IMR-90 (cell line): ENCODE measurements at regions of chr2 and their contacts with region 1.

Region 1: DNA sequence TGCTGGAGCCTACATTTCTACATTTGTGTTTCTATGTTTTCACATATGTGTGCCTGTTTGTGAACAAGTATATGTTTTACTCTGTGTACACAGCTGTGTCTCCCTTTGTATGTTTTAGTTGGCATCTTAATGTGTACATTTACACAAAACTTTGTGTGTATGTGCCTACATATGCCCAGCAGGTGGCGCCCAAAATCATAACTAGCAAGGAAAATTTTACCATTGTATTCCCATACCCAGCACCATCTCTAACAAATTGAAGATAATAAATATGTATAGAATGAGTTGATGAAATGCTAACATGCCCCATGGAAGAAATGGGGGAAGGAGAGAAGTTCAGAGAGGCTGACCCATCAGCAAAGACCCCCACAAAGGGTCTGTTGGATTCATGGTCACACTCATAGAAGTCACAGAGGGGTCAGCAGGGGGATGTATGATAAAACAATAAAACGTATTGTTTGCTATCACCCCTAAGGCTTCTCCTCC is 48.1 kb downstream of the PKDCC start:
- DNase-seq: peak; percentile 83
- ATAC-seq: peak; percentile 65
- H3K4me3 ChIP-seq: no peak overlapping the region
- H3K27ac ChIP-seq: no peak overlapping the region
- H3K4me1 ChIP-seq: peaks cover 22% of the 10 kb centered on the region
- H3K27me3 ChIP-seq: no peaks in the 10 kb centered on the region
- CTCF ChIP-seq: peak; percentile 88
- POLR2A ChIP-seq: peak; percentile 27; the same call in 1 of the 2 replicates
- RAD21 ChIP-seq: peak; percentile 90

Region 2: DNA sequence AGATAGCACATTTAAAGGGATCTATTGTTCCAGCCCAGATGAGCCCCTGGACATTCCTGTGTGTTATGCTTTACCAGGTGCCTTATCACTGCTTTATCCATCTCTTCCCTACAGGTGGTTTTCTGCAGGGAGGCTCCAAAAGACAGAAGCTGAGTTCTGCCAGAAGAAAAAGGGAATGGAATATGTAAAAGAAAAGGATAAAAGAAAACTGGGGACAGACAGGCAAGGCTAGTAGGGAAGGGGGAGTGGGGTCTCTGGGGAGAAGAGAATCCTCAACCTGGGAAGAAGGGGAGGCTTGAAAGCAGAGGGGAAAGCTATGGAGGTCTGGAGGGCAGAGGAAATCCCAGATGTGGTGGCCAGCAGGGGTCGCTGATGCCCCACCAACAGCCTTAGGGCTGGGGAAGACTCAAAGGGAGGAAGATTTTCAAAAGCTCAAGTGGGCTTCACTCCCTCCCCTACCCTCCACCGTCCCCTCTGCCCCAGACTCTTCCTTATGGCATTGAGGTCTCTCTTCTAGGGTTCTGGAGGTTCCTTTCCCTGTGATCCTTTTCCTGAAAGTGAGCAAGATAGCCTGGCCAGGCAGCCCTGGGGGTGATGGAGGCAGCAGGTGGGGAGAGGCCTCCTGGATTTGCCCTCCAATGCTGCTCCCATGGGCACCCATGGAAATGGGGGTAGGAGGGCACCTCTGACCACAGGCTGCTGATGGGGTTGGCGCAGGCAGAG is 226.3 kb before region 1 on chr2:
- CTCF ChIA-PET with region 1: interaction called, 15 read pairs
- POLR2A ChIA-PET with region 1: no interaction called
- dilution Hi-C with region 1: no loop called
- in situ Hi-C with region 1: no loop called
- intact Hi-C with region 1: no loop called
- DNase-seq: peak; percentile 55
- ATAC-seq: peak; percentile 77
- H3K4me3 ChIP-seq: no peak overlapping the region
- H3K27ac ChIP-seq: no peak overlapping the region
- H3K4me1 ChIP-seq: peaks cover 22% of the 10 kb centered on the region
- H3K27me3 ChIP-seq: no peaks in the 10 kb centered on the region
- CTCF ChIP-seq: peak; percentile 94
- POLR2A ChIP-seq: 0 out of 2 replicates have a peak, but pooled peaks have one; percentile 28
- RAD21 ChIP-seq: peak; percentile 98

Region 3: DNA sequence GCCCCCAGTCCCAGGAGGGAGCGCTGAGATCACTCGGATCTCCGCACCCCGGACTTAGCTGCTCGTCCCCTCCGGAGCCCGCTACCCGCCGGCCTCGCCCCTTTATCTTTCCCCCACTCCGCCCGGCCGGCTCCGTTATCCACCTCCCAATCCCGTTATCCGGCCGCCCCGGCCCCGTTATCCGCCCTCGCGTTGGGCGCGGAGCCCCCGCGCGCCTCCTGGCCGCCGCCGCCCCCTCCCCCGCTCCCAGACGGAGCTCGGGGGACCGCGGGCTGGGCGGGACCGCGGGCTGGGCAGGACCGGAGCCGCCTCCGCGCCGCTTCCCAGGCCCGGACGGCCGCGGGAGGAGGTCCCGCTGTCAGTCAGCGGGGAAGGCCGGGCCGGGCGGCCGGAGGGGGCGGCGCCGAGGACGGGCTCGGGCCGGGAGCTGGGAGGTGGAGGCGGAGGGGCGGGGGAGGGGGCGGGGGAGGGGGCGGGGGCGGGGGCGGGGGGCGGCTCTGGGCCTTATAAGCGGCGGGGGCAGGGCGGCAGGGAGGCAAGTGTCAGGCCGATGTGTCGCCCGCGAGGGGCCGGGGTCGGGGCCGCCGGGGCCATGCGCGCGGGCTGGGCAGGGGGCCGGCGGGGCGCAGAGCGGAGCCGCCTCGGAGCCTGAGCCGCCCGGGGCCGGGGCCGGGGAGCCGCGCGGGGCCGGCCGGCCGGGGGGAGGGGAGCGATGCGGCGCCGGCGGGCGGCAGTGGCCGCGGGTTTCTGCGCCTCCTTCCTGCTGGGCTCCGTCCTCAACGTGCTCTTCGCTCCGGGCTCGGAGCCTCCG is 48.3 kb before region 1 on chr2 and contains the start of gene PKDCC:
- CTCF ChIA-PET with region 1: no interaction called
- POLR2A ChIA-PET with region 1: no interaction called
- dilution Hi-C with region 1: no loop called
- in situ Hi-C with region 1: no loop called
- intact Hi-C with region 1: no loop called
- DNase-seq: peak; percentile 79
- ATAC-seq: peak; percentile 88
- H3K4me3 ChIP-seq: peak within 1 kb of the TSS; percentile 94
- H3K27ac ChIP-seq: peak within 1 kb of the TSS; percentile 84
- H3K4me1 ChIP-seq: peaks cover 24% of the 10 kb centered on the region
- H3K27me3 ChIP-seq: no peaks in the 10 kb centered on the region; the same call in 1 of the 2 replicates
- CTCF ChIP-seq: no peak
- POLR2A ChIP-seq: no peak
- RAD21 ChIP-seq: no peak; the same call in 1 of the 2 replicates
- total RNA-seq, gene PKDCC: 50.3 and 55.6 TPM in 2 replicates

Region 4: GRCh38 chr2:42196403-42197267 is 100.7 kb after region 1 on chr2:
- CTCF ChIA-PET with region 1: interaction called, 6 read pairs
- POLR2A ChIA-PET with region 1: no interaction called
- dilution Hi-C with region 1: no loop called
- in situ Hi-C with region 1: no loop called
- intact Hi-C with region 1: loop called (anchors 2 kb)
- DNase-seq: peak; percentile 58
- ATAC-seq: peak; percentile 24
- H3K4me3 ChIP-seq: no peak overlapping the region
- H3K27ac ChIP-seq: no peak overlapping the region
- H3K4me1 ChIP-seq: peaks cover 21% of the 10 kb centered on the region
- H3K27me3 ChIP-seq: no peaks in the 10 kb centered on the region
- CTCF ChIP-seq: peak; percentile 65
- POLR2A ChIP-seq: no peak
- RAD21 ChIP-seq: peak; percentile 48

Region 5: GRCh38 chr2:42296226-42296625 is 200.3 kb after region 1 on chr2:
- CTCF ChIA-PET with region 1: no interaction called
- POLR2A ChIA-PET with region 1: no interaction called
- dilution Hi-C with region 1: no loop called
- in situ Hi-C with region 1: no loop called
- intact Hi-C with region 1: loop called (anchors 10 kb)
- DNase-seq: no peak
- ATAC-seq: no peak
- H3K4me3 ChIP-seq: no peak overlapping the region
- H3K27ac ChIP-seq: no peak overlapping the region
- H3K4me1 ChIP-seq: peaks cover 2% of the 10 kb centered on the region; the same call in 1 of the 2 replicates
- H3K27me3 ChIP-seq: no peaks in the 10 kb centered on the region
- CTCF ChIP-seq: no peak
- POLR2A ChIP-seq: no peak
- RAD21 ChIP-seq: no peak

Region 6: GRCh38 chr2:42328148-42328833 is 232.3 kb after region 1 on chr2:
- CTCF ChIA-PET with region 1: no interaction called
- POLR2A ChIA-PET with region 1: no interaction called
- dilution Hi-C with region 1: no loop called
- in situ Hi-C with region 1: loop called (anchors 5 kb)
- intact Hi-C with region 1: loop called (anchors 1 kb)
- DNase-seq: peak; percentile 57
- ATAC-seq: peak; percentile 56; the same call in 1 of the 2 replicates
- H3K4me3 ChIP-seq: no peak overlapping the region
- H3K27ac ChIP-seq: no peak overlapping the region
- H3K4me1 ChIP-seq: no peaks in the 10 kb centered on the region; the same call in 1 of the 2 replicates
- H3K27me3 ChIP-seq: no peaks in the 10 kb centered on the region
- CTCF ChIP-seq: peak; percentile 58
- POLR2A ChIP-seq: no peak
- RAD21 ChIP-seq: peak; percentile 57

Region 7: DNA sequence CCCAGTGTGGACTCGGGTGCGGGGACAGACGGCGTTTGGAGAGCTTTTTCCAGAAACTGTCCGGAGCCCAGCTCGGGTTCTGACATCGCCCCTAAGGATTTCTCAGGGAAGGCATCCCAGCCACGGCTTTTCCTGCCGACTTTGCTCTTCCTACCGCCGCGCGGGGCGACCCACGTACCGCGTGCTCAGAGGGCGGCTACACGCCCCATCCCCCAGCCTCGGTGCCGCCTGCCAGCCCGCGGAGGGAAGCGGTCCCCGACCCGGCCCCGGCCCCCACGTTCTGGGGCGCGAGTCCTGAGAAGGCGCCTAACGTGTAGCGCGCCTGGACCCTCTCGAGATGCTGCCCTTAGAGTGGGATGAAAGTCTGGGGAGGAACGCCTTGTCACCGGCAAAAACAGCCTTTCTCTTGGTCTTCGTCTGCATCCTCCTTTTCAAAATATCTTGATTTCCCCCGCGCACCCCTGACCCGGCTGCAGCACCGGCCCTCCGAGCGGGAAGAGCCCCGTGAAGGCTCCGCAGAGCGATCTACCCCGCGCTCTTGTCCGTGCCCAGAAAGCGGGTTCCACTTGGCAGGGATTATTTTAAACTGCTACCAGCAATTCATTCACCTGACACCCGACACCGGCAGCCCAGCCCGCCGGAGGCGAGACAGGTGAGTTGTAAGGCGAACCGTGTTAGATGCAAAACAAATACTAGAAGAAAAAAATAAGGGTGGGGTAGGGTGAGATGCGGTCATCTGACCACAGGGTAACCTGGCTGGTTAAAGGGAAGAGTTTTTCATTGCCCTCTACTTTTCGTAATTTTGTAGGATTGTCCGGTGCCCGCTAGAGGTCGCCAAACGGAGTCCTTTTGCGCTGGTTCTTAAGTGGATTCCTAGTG is 398.6 kb after region 1 on chr2:
- CTCF ChIA-PET with region 1: no interaction called
- POLR2A ChIA-PET with region 1: no interaction called
- dilution Hi-C with region 1: no loop called
- in situ Hi-C with region 1: no loop called
- intact Hi-C with region 1: loop called (anchors 10 kb)
- DNase-seq: peak; percentile 75
- ATAC-seq: peak; percentile 72
- H3K4me3 ChIP-seq: peak overlapping the region; percentile 31
- H3K27ac ChIP-seq: no peak overlapping the region
- H3K4me1 ChIP-seq: no peaks in the 10 kb centered on the region
- H3K27me3 ChIP-seq: peaks cover 52% of the 10 kb centered on the region
- CTCF ChIP-seq: peak; percentile 86
- POLR2A ChIP-seq: no peak
- RAD21 ChIP-seq: peak; percentile 76

Region 8: GRCh38 chr2:43985359-43985758 is 1889.4 kb after region 1 on chr2:
- CTCF ChIA-PET with region 1: no interaction called
- POLR2A ChIA-PET with region 1: no interaction called
- dilution Hi-C with region 1: no loop called
- in situ Hi-C with region 1: no loop called
- intact Hi-C with region 1: no loop called
- DNase-seq: no peak
- ATAC-seq: no peak
- H3K4me3 ChIP-seq: no peak overlapping the region
- H3K27ac ChIP-seq: no peak overlapping the region
- H3K4me1 ChIP-seq: no peaks in the 10 kb centered on the region
- H3K27me3 ChIP-seq: no peaks in the 10 kb centered on the region
- CTCF ChIP-seq: no peak
- POLR2A ChIP-seq: no peak
- RAD21 ChIP-seq: no peak